Endothelial cell of umbilical vein (primary cell): ENCODE measurements at regions of chr10 and their contacts with region 1.

Region 1: GRCh38 chr10:103859161-103860086 is 4.0 kb upstream of the SH3PXD2A start:
- DNase-seq: peak; percentile 78
- H3K4me3 ChIP-seq: no peak overlapping the region
- H3K27ac ChIP-seq: no peak overlapping the region
- H3K4me1 ChIP-seq: peaks cover 9% of the 10 kb centered on the region
- H3K27me3 ChIP-seq: no peaks in the 10 kb centered on the region
- CTCF ChIP-seq: peak; percentile 64 to 69
- POLR2A ChIP-seq: no peak

Region 2: DNA sequence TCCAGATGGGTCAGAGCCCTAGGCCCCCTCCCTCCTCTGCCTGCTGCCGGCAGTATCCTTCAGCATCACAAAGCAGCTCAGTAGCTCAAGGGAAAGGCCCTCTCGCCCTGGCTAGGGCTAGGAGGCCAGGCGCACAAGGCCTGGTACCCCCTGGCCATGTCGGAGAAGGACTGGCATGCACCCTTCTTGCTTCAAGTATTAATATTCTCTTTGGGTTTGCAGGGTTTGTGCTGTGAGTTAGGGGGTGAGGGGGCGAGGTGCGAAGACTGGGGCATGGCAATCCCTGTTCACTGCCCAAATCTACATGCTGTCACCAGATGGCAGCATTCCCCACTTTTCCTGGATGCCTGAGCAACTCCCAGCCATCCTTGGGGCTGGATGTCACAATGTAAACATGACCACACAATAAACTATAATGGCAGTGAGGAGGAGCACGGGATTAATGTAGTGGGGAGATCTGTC is 260.7 kb before region 1 on chr10:
- CTCF ChIA-PET with region 1: no interaction called
- POLR2A ChIA-PET with region 1: no interaction called
- dilution Hi-C with region 1: no loop called
- intact Hi-C with region 1: loop called (anchors 2 kb)
- DNase-seq: peak; percentile 70
- H3K4me3 ChIP-seq: no peak overlapping the region
- H3K27ac ChIP-seq: no peak overlapping the region
- H3K4me1 ChIP-seq: peaks cover 17% of the 10 kb centered on the region
- H3K27me3 ChIP-seq: no peaks in the 10 kb centered on the region
- CTCF ChIP-seq: peak; percentile 78
- POLR2A ChIP-seq: no peak

Region 3: GRCh38 chr10:103752680-103753248 is 106.7 kb before region 1 on chr10:
- CTCF ChIA-PET with region 1: interaction called, 30 read pairs
- POLR2A ChIA-PET with region 1: no interaction called
- dilution Hi-C with region 1: no loop called
- intact Hi-C with region 1: no loop called
- DNase-seq: no peak
- H3K4me3 ChIP-seq: no peak overlapping the region
- H3K27ac ChIP-seq: no peak overlapping the region
- H3K4me1 ChIP-seq: peaks cover 7% of the 10 kb centered on the region
- H3K27me3 ChIP-seq: no peaks in the 10 kb centered on the region
- CTCF ChIP-seq: peak; percentile 57 to 62
- POLR2A ChIP-seq: no peak

Region 4: GRCh38 chr10:103781329-103782061 is 77.9 kb before region 1 on chr10:
- CTCF ChIA-PET with region 1: interaction called, 8 read pairs
- POLR2A ChIA-PET with region 1: no interaction called
- dilution Hi-C with region 1: no loop called
- intact Hi-C with region 1: loop called (anchors 1 kb)
- DNase-seq: peak; percentile 22
- H3K4me3 ChIP-seq: no peak overlapping the region
- H3K27ac ChIP-seq: no peak overlapping the region
- H3K4me1 ChIP-seq: no peaks in the 10 kb centered on the region
- H3K27me3 ChIP-seq: no peaks in the 10 kb centered on the region
- CTCF ChIP-seq: peak; percentile 12 to 21
- POLR2A ChIP-seq: no peak